Activated naive CD4-positive, alpha-beta T cell treated with anti-CD3 and anti-CD28 coated beads for 36 hours (primary cell): ENCODE measurements at regions of chr14 and their contacts with region 1.

Region 1: DNA sequence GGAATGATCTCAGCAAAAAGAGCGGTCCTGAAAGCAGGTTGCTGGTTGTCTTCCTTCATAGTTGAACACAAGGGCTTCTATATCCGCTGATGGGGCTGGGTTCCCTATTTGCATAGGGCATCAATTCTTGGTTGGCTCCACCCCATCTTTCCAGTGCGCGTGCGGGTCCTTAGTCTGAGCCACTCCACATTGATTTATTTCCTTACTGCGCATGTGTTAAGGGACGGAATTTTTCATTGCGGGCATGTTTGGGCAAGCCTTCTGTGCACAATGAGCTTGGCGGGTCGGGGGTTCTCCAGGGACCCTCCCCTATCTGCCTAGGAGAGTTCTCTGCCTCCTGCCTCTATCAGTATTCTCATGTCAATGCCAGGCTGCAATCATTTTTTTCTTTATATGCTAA is 21.2 kb upstream of the DLGAP5 start:
- DNase-seq: no peak
- H3K4me3 Mint-ChIP-seq: no peak overlapping the region
- H3K27ac Mint-ChIP-seq: no peak overlapping the region
- H3K4me1 Mint-ChIP-seq: peaks cover 4% of the 10 kb centered on the region
- H3K27me3 Mint-ChIP-seq: no peaks in the 10 kb centered on the region

Region 2: DNA sequence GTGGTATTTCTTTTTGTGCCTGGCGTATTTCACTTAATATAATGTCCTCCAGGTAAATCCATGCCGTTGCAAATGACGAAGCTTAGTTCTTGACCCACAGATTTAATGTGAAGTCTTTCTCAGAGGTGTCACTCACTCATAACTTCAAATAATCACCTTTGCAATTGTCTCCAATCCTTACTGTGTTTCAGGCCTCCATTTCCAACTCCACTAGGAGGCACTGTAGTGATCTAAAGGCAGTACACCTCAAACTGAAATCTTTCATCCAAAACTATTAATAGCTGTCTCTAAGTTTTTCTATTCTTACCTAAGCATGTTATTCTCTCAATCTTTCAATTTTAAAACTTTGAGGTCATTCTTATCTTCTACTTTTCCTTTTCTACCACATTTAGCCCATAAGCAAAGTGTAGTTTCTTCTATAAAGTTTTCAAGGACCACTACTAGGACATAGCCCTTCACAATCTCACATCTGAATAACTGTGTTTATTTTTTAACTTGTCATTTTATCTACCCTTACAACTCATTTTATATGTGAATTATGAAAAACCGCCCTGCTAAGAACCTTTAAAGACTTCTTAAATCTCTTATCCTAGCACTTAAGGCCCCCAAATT is 33.1 kb after region 1 on chr14:
- CTCF ChIA-PET with region 1: interaction called, 4 read pairs
- intact Hi-C with region 1: loop called (anchors 2 kb)
- DNase-seq: peak; percentile 53
- H3K4me3 Mint-ChIP-seq: no peak overlapping the region
- H3K27ac Mint-ChIP-seq: no peak overlapping the region
- H3K4me1 Mint-ChIP-seq: peaks cover 2% of the 10 kb centered on the region
- H3K27me3 Mint-ChIP-seq: peaks cover 4% of the 10 kb centered on the region

Region 3: GRCh38 chr14:55438066-55438683 is 225.5 kb after region 1 on chr14:
- CTCF ChIA-PET with region 1: interaction called, 12 read pairs
- intact Hi-C with region 1: loop called (anchors 1 kb)
- DNase-seq: peak; percentile 32
- H3K4me3 Mint-ChIP-seq: no peak overlapping the region
- H3K27ac Mint-ChIP-seq: no peak overlapping the region
- H3K4me1 Mint-ChIP-seq: peaks cover 21% of the 10 kb centered on the region
- H3K27me3 Mint-ChIP-seq: no peaks in the 10 kb centered on the region